ENCODE measurements at regions of chr14 and their contacts with region 1.

Region 1: DNA sequence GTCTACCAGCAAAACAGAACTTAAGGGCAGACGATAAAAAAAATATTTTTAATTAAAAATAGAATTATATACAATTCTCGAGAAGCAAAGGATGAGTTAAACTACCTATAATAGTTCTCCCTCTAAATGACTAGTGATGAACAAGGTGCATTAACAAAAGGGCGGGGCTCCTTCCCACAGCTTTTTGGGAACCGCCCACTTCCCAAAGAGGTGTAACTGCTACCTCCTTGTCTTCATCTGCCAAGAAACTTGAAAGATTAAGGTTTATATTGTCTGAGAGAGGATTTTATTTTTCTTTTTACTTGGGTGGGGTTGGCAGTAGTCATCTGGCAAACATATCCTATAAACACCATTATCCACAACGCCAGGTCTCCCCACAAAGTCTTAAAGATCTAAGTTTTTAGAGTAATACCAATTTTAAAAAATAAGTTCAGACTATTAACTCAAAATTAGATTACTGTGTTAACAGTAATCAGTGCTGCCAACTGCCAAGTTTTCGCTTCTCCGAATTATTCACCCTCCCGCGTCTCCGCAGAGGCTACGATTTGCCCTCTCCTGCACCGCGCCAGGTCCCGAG is 931 bp downstream of the RALGAPA1 start:
- DNase-seq: peak in 1 of 2 donors; percentile 14
- ATAC-seq: peak; percentile 34 to 59
- H3K4me3 ChIP-seq: peak overlapping the region; percentile 56 to 89 (median 74)
- H3K27ac ChIP-seq: peak overlapping the region; percentile 85 to 94 (median 88)
- H3K4me1 ChIP-seq: peaks cover 20 to 22% of the 10 kb centered on the region in 2 donors
- H3K27me3 ChIP-seq: no peaks in the 10 kb centered on the region
- CTCF ChIP-seq: no peak
- POLR2A ChIP-seq: no peak

Region 2: DNA sequence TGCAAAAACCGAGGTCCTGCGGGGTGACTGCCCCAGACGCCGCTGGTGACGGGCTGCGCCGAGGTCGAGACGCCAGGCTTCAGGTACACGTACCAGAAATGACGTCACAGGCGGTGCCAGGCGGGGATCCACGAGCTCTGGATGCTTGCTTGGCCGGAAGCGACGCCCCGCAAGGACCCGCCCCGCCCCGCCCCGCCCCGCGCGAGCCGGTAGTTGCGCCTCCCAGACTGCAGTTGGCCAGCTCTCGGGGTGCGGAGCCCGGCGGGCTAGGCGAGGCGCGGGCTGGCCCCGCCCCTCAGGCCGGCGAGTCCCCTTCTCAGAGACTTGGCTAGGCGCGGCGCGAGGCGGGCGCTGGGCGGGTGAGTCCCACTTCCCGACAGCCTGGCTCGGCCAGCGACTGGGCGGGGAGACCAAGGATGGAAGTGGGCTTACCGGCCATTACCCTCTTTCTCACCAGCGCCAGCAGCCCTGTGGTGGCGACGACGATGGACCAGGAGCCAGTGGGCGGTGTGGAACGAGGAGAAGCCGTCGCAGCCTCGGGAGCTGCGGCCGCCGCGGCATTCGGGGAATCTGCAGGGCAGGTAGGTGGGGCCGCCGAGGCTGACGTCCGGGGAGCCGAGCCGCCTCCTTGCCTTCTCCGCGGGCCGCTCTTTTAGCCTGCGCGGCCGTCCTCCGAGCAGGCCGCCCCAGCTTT is 762.0 kb before region 1 on chr14 and contains the start of gene FAM177A1:
- in situ Hi-C with region 1: no loop called
- intact Hi-C with region 1: loop called (anchors 10 kb)
- DNase-seq: peak; percentile 95 to 97
- ATAC-seq: peak; percentile 81 to 90
- H3K4me3 ChIP-seq: peak within 1 kb of the TSS; percentile 77 to 94 (median 88)
- H3K27ac ChIP-seq: peak within 1 kb of the TSS; percentile 90 to 98 (median 94)
- H3K4me1 ChIP-seq: peaks cover 37 to 40% of the 10 kb centered on the region in 2 donors
- H3K27me3 ChIP-seq: no peaks in the 10 kb centered on the region
- CTCF ChIP-seq: no peak
- POLR2A ChIP-seq: peak; percentile 91 to 94
- total RNA-seq, gene FAM177A1: 13.5 to 35.8 (median 21.8) TPM

Region 3: DNA sequence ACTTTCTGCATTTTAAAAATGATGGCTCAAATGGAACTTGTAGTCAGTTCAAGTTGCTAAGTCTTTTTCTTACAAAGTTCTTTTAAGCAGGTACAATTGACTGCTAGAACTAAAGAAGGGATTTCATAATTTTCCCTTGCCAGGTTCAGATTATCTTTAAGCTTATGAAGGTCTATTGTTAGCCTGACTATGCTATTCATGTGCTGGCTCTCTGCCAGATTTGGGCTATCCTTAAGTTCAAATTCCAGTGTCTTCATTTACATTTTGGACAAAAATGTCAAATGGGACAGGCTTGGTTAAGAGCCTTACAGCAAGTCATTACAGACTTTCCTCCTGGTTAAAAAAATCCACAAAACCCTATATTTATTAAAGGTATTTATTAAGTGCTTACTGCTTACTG is 231.9 kb before region 1 on chr14:
- in situ Hi-C with region 1: no loop called
- intact Hi-C with region 1: no loop called
- DNase-seq: no peak
- ATAC-seq: no peak
- H3K4me3 ChIP-seq: no peak overlapping the region
- H3K27ac ChIP-seq: no peak overlapping the region
- H3K4me1 ChIP-seq: peaks cover 0 to 8% of the 10 kb centered on the region in 2 donors
- H3K27me3 ChIP-seq: no peaks in the 10 kb centered on the region
- CTCF ChIP-seq: no peak
- POLR2A ChIP-seq: no peak

Region 4: DNA sequence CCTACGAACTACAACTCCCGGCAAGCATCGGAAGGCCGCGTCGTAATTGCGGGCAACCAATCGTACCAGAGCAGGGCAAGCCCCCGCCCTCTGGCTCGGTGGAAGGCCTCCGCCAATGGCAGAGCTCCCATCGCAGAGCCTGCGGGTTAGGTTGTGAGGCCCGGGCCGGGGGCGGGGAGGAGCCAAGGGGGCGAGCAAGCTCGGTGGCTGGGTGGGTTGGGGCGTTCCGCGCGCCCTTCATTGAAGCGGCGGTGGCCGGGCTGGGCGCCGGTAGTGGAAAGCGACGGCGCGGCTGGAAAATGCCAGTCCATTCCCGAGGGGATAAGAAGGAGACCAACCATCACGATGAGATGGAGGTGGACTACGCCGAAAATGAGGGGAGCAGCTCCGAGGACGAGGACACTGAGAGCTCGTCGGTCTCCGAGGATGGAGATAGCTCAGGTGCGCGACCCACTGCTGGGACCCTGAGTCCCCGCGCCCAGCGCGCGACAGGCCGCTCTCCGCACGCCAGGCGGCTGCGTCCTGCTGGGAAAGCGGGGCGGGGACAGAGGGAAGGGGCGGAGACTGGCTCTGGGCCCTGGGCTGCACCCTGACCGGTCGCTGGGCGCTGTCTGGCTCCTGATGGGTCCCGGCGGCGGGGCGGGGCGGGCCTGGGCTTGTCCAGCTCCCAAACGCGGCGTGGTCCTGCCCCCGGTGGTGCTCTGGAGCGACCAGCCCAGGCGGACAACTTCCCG is 18.2 kb after region 1 on chr14 and contains the start of gene BRMS1L:
- in situ Hi-C with region 1: no loop called
- intact Hi-C with region 1: loop called (anchors 1 kb)
- DNase-seq: peak; percentile 96 to 98
- ATAC-seq: peak; percentile 97 to 98
- H3K4me3 ChIP-seq: peak within 1 kb of the TSS; percentile 74 to 91 (median 88)
- H3K27ac ChIP-seq: peak within 1 kb of the TSS; percentile 89 to 98 (median 96)
- H3K4me1 ChIP-seq: peaks cover 0 to 15% of the 10 kb centered on the region in 2 donors
- H3K27me3 ChIP-seq: no peaks in the 10 kb centered on the region
- CTCF ChIP-seq: peak in 2 of 5 experiments; percentile 31 to 44
- POLR2A ChIP-seq: peak; percentile 87 to 92
- total RNA-seq, gene BRMS1L: 4.6 to 6.8 (median 6.1) TPM

Measured in gastrocnemius medialis (tissue), 4 donors.